ENCODE measurements at regions of chr14 and their contacts with region 1.

Region 1: DNA sequence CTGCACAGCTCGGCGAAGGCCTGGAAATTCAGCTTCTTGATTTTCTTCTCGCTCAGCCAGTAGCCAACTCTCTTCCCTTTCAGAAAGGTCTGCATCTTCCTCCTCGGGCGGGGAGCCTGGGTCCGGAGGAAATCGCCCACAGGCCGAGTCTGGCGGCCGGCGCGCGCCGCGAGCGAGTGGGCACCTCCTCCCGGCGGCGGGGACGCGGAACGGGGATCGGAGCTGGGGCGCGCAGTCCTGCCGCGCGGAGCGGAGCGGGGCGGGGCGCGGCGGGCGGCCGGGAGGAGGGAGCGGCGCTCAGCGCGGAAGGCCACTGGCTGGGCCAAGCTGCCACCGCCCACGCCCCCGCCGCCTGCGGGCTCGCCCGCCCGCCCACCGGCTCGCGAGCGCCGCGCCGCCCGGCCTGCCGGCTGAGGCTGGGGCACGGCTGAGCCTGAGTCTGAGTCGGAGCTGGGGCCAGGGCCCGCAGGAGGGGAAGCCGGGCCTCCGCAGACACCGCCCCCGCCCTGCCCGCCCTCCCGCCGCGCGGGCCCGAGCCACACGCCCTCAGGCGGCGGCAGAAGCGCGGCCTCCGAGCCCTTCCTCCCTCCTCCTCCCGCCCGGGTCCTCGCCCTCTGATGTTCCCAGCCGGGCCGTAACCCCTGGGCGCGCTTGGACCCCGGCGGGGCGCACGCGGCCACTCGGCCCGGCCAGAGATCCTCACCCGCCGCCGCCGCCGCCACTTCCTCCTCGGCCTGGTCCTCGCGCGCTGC is 480 bp downstream of the ITPK1 start:
- DNase-seq: peak; percentile 84 to 92
- ATAC-seq: peak; percentile 73 to 92 (median 80)
- H3K4me3 ChIP-seq: peak overlapping the region; percentile 53
- H3K4me3 Mint-ChIP-seq: peak overlapping the region; percentile 90
- H3K27ac ChIP-seq: peak overlapping the region; percentile 37
- H3K27ac Mint-ChIP-seq: peak overlapping the region in 1 of 2 donors; percentile 97
- H3K4me1 ChIP-seq: peaks cover 40% of the 10 kb centered on the region
- H3K4me1 Mint-ChIP-seq: peaks cover 18 to 39% of the 10 kb centered on the region in 2 donors
- H3K27me3 ChIP-seq: no peaks in the 10 kb centered on the region
- H3K27me3 Mint-ChIP-seq: no peaks in the 10 kb centered on the region
- CTCF ChIP-seq: no peak

Region 2: DNA sequence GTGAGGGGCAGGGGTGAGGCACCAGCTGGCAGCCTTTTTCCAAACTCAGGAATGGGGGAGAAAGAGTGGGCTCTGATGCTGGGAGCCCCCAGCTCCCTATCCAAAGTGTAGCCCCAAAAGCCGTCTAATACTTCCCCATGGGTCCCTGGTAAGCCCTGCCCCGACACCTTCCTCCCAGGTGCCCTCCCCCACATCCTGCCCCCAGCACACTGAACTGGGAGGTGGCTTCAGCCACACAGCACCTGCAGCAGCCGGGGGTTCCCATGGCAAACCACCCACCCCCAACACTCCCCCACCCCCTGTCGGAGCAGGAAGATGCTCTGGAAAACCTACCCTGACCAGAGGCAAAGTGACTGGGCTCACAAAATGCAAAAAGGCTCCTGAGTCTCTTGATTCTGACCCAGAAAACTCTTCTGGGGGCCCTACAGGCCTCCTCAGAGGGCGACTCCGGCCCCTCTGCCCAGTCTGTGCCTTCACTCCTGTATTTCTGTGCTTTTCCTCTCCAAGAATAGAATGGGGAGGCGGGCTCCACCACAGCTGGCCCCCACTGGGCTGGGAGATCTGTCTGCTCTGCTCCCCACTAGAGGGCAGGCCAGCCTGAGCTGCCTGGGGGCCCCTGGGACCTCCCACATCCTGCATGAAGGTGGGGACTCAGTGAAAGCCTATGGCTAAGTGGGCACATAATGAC is 81.1 kb before region 1 on chr14:
- intact Hi-C with region 1: loop called (anchors 1 kb)
- DNase-seq: peak; percentile 53 to 69
- ATAC-seq: peak; percentile 58 to 70 (median 61)
- H3K4me3 ChIP-seq: no peak overlapping the region
- H3K4me3 Mint-ChIP-seq: peak overlapping the region; percentile 60
- H3K27ac ChIP-seq: peak overlapping the region; percentile 91
- H3K27ac Mint-ChIP-seq: peak overlapping the region; percentile 65 to 84
- H3K4me1 ChIP-seq: peaks cover 55% of the 10 kb centered on the region
- H3K4me1 Mint-ChIP-seq: peaks cover 35 to 69% of the 10 kb centered on the region in 2 donors
- H3K27me3 ChIP-seq: no peaks in the 10 kb centered on the region
- H3K27me3 Mint-ChIP-seq: no peaks in the 10 kb centered on the region
- CTCF ChIP-seq: peak; percentile 78

Region 3: DNA sequence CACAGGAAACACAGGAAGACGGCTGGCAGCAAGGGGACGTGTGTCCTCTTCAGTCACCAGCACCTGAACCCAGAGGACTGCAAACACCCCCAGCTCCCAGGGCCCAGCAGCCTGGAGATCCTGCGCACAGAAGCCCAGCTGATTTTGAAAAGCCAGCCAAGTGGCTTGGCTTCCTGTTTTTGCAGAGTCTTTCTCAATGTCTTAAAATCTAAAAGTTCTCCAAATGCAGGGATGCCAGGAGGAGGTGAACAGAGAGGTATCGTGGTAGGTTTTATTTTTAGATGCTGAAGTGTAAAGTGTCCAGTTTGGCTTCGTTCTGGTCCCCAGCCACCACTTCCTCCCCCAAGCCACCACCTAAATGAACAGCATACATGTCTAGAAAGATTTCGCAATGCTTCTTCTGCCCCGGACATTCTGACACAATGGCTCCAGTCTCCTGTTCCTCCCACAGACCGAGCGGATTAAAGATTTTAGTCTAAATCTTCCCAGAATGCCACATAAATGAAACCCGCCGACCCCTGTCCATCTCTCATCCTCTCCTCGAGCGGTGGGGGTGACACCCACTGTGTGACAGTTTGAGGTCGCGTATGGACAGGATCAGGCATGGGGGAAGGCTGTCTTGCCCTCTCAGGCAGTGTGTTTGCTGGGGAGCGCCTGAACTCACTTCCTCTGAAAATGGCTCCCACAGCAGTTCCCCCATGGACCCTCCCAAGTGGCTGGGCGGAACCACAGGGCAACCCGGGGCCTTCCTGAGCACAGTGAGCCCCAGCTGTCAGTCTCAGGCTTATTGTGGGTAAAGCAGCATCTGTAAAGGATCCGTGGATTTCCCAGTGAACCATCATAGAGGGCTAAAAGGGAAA is 41.1 kb before region 1 on chr14:
- intact Hi-C with region 1: loop called (anchors 2 kb)
- DNase-seq: peak; percentile 23 to 37
- ATAC-seq: peak; percentile 71 to 74 (median 72)
- H3K4me3 ChIP-seq: no peak overlapping the region
- H3K4me3 Mint-ChIP-seq: peak overlapping the region; percentile 65
- H3K27ac ChIP-seq: peak overlapping the region; percentile 83
- H3K27ac Mint-ChIP-seq: peak overlapping the region; percentile 91 to 95
- H3K4me1 ChIP-seq: peaks cover 62% of the 10 kb centered on the region
- H3K4me1 Mint-ChIP-seq: peaks cover 54 to 68% of the 10 kb centered on the region in 2 donors
- H3K27me3 ChIP-seq: no peaks in the 10 kb centered on the region
- H3K27me3 Mint-ChIP-seq: no peaks in the 10 kb centered on the region
- CTCF ChIP-seq: no peak

Region 4: DNA sequence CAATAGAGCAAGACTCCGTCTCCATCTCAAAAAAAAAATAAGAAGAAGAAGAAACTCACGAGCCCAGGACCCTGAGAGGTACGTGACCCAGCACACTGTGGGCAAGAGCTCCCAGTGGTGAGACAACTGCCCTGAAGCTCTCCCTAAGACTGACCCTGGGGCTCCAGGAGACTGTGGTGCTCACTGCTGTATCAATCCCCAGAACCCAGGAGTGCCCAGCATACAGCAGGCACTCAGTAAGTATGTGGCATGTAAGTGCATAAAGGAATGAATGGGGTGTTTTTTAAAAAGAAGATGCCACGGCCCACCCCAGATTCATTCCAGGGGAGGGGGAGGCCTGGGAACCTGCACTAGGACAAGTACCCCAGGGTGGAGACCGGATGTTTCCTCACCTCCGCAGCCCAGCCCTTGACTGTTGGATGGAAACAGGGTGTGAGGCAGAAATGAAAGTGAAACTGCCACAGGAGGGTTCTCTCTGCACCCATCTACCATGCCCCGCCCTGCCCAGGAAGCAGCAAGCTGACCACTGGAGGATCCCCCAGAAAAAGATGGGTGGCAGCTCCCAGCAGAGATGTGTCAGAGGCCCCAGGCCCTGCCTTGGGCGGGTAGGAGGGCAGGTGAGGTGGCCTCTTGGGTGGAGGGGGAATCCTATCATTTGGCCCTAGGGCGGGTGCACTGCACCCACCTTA is 11.7 kb before region 1 on chr14:
- intact Hi-C with region 1: loop called (anchors 1 kb)
- DNase-seq: peak; percentile 63 to 84
- ATAC-seq: peak; percentile 96 to 97 (median 96)
- H3K4me3 ChIP-seq: peak overlapping the region; percentile 15
- H3K4me3 Mint-ChIP-seq: peak overlapping the region; percentile 89
- H3K27ac ChIP-seq: peak overlapping the region; percentile 96
- H3K27ac Mint-ChIP-seq: peak overlapping the region; percentile 90 to 96
- H3K4me1 ChIP-seq: peaks cover 54% of the 10 kb centered on the region
- H3K4me1 Mint-ChIP-seq: peaks cover 30 to 56% of the 10 kb centered on the region in 2 donors
- H3K27me3 ChIP-seq: no peaks in the 10 kb centered on the region
- H3K27me3 Mint-ChIP-seq: no peaks in the 10 kb centered on the region
- CTCF ChIP-seq: no peak

Region 5: DNA sequence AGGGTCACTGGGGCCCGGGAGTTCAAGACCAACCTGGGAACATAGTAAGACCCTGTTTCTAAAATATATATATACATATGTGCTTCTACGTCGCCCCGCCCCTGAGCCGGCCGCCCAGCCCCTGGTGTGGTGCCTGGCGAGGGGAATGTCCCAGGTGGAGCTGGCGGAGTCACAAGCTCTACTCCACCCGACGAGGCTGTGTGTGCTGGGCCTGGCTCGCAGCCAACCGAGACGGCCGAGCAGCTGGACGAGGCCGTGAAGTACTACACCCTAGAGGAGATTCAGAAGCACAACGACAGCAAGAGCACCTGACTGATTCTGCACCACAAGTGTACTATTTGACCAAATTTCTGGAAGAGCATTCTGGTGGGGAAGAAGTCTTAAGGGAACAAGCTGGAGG is 22.6 kb after region 1 on chr14:
- intact Hi-C with region 1: loop called (anchors 1 kb)
- DNase-seq: no peak
- ATAC-seq: no peak
- H3K4me3 ChIP-seq: no peak overlapping the region
- H3K4me3 Mint-ChIP-seq: no peak overlapping the region
- H3K27ac ChIP-seq: no peak overlapping the region
- H3K27ac Mint-ChIP-seq: no peak overlapping the region
- H3K4me1 ChIP-seq: no peaks in the 10 kb centered on the region
- H3K4me1 Mint-ChIP-seq: peaks cover 5 to 6% of the 10 kb centered on the region in 2 donors
- H3K27me3 ChIP-seq: no peaks in the 10 kb centered on the region
- H3K27me3 Mint-ChIP-seq: no peaks in the 10 kb centered on the region
- CTCF ChIP-seq: no peak

Region 6: GRCh38 chr14:93184388-93185353 is 69.4 kb after region 1 on chr14 and contains the starts of genes LYSET and MOAP1:
- intact Hi-C with region 1: loop called (anchors 10 kb)
- DNase-seq: peak; percentile 87 to 96
- ATAC-seq: peak; percentile 80 to 92 (median 89)
- H3K4me3 ChIP-seq: peak within 1 kb of the TSS; percentile 97
- H3K4me3 Mint-ChIP-seq: peak within 1 kb of the TSS; percentile 94
- H3K27ac ChIP-seq: peak within 1 kb of the TSS; percentile 100
- H3K27ac Mint-ChIP-seq: peak within 1 kb of the TSS; percentile 91 to 94
- H3K4me1 ChIP-seq: peaks cover 23% of the 10 kb centered on the region
- H3K4me1 Mint-ChIP-seq: peaks cover 28 to 33% of the 10 kb centered on the region in 2 donors
- H3K27me3 ChIP-seq: no peaks in the 10 kb centered on the region
- H3K27me3 Mint-ChIP-seq: no peaks in the 10 kb centered on the region
- CTCF ChIP-seq: peak; percentile 23
- total RNA-seq, gene LYSET: 6.1 to 13.1 (median 9.0) TPM
- total RNA-seq, gene MOAP1: 89.5 to 106 (median 91.4) TPM

Region 7: GRCh38 chr14:93219103-93219726 is 104.0 kb after region 1 on chr14:
- intact Hi-C with region 1: loop called (anchors 1 kb)
- DNase-seq: peak in 1 of 2 donors; percentile 78
- ATAC-seq: peak; percentile 71 to 78 (median 77)
- H3K4me3 ChIP-seq: no peak overlapping the region
- H3K4me3 Mint-ChIP-seq: no peak overlapping the region
- H3K27ac ChIP-seq: no peak overlapping the region
- H3K27ac Mint-ChIP-seq: no peak overlapping the region
- H3K4me1 ChIP-seq: no peaks in the 10 kb centered on the region
- H3K4me1 Mint-ChIP-seq: no peaks in the 10 kb centered on the region
- H3K27me3 ChIP-seq: no peaks in the 10 kb centered on the region
- H3K27me3 Mint-ChIP-seq: no peaks in the 10 kb centered on the region
- CTCF ChIP-seq: peak; percentile 51